Activated naive CD4-positive, alpha-beta T cell treated with anti-CD3 and anti-CD28 coated beads for 36 hours (primary cell): ENCODE measurements at regions of chr18 and their contacts with region 1.

Region 1: DNA sequence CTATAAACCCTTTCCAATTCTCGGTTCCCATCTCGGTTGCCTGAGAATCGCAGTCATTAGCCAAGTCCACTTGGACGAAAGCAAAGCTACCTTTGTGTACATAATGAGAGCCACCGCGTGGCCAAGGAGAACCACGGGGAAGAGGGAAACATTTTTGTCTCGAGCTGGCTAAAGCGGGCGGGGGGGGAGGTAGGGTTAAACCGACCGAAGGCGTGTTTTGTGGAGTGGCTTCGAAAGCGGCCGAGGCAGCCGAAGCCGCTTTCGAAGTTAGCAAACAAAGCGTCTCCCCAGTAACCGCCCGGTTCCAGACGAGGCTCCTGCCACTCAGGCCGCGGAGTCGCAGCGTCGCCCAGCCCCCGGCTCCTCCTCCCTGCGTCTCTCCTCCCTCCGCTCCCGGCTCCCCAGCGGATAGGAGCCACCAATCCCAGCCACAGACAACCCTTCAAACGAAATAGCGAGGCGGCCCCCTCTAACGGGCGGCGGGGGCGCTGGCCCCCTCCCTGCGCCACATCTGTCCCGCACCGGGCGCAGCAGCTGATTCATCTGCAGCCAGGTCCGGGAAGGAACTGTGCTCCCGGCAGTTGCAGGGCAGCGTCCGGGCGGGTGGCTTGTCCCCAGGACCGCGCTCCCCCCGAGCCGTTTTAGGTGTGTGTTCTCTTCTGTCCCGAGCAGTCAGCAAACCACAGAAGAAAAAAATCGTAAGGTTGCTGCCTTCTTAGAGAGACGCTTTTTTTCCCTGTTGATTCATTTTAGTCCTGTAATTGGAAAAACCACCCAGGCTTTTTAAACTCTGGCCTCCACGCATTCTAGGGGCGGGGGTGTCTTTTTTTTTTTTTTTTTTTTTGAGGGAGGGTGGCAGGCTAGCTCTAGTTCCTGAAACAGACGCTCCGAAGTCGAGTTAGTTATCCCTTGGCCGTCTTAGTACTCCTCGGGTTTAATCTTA is 1.8 kb upstream of the TGIF1 start:
- DNase-seq: peak; percentile 90
- H3K4me3 Mint-ChIP-seq: peak overlapping the region; percentile 89
- H3K27ac Mint-ChIP-seq: peak overlapping the region; percentile 98
- H3K4me1 Mint-ChIP-seq: peaks cover 30% of the 10 kb centered on the region
- H3K27me3 Mint-ChIP-seq: no peaks in the 10 kb centered on the region

Region 2: DNA sequence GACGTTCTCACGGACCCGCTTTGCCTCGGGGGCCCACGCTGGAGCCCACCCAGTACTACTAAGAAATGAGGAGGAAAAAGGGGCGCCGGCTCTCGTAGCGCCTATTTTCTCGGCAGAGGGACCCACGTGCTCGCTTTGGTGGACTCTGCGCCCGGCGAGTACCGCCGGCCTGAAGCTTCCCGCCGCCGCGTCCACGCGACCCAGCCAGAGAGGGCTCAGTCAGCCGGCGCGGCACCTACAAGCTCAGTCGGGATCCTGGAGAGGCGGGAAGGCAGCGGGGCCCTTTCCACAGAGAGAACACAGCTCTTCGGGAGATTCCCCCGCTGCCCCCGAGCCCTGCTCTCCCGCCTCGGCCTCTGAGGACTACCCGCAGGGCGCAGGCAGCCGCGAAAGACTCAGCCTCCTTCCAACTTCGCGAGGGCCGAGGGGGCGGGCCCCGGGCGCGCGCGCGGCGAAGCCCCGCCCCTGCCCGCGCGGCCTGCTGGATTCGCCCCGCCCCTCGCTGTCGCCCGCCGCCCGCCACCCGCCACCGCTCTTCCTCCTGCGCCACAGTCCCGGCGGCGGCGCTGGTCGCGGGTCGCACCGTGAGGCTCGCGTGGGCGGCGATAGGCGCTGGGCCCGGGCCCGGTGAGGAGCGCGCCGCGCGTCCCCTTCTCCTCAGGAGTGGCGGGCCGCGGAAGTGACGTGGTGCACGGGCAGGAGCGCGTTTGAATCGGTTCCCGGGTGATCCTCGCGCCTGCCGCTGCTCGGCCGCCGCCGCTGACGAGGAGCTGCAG is 792.8 kb before region 1 on chr18 and contains the start of gene SMCHD1:
- CTCF ChIA-PET with region 1: no interaction called
- intact Hi-C with region 1: loop called (anchors 2 kb)
- DNase-seq: peak; percentile 93
- H3K4me3 Mint-ChIP-seq: peak within 1 kb of the TSS; percentile 93
- H3K27ac Mint-ChIP-seq: peak within 1 kb of the TSS; percentile 96
- H3K4me1 Mint-ChIP-seq: peaks cover 34% of the 10 kb centered on the region
- H3K27me3 Mint-ChIP-seq: no peaks in the 10 kb centered on the region
- total RNA-seq, gene SMCHD1: 91.3 to 91.5 TPM

Region 3: DNA sequence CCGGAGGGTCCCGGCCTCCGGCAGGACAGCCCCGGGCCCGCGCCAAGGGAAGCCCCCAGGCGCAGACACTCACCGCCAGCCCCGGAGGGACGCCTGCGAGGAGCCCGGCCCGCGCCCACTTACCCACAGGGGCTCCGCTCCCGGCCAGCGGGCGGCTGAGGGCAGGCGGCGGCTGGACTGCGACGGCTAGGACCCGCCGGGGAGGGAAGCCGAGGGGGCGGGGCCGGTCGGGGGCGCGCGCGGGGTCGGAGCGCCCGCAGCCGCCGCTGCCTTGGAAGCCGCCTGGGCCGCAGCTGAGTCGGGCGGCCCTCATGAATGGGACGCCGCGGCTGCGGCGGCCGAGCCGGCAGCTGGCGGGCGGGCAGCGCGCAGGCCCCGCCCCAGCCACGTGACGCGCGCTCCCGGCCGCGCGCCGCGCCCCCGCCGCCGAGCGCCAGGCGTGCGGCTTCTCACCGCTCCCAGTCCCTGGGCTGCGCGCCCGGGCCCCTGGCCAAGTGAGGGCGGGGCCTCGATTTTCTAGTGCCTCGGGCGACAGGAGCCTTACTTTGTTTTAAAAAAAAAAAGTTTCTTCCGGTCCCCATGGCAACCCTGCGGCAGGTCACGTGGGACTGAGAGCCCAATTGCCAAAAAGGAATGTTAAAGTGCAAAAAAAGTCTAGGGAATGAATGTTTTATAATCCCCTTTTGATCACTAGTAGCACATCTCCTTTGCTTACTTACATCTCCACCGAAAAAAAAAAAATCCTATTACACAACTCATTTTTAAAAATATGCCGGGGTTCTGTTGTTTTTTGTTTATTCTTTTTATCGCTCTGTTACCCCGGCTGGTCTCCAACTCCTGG is 435.0 kb before region 1 on chr18 and contains the start of gene LPIN2:
- CTCF ChIA-PET with region 1: no interaction called
- intact Hi-C with region 1: loop called (anchors 2 kb)
- DNase-seq: peak; percentile 97
- H3K4me3 Mint-ChIP-seq: peak within 1 kb of the TSS; percentile 84
- H3K27ac Mint-ChIP-seq: peak within 1 kb of the TSS; percentile 92
- H3K4me1 Mint-ChIP-seq: peaks cover 68% of the 10 kb centered on the region
- H3K27me3 Mint-ChIP-seq: no peaks in the 10 kb centered on the region
- total RNA-seq, gene LPIN2: 62.4 to 65.7 TPM

Region 4: DNA sequence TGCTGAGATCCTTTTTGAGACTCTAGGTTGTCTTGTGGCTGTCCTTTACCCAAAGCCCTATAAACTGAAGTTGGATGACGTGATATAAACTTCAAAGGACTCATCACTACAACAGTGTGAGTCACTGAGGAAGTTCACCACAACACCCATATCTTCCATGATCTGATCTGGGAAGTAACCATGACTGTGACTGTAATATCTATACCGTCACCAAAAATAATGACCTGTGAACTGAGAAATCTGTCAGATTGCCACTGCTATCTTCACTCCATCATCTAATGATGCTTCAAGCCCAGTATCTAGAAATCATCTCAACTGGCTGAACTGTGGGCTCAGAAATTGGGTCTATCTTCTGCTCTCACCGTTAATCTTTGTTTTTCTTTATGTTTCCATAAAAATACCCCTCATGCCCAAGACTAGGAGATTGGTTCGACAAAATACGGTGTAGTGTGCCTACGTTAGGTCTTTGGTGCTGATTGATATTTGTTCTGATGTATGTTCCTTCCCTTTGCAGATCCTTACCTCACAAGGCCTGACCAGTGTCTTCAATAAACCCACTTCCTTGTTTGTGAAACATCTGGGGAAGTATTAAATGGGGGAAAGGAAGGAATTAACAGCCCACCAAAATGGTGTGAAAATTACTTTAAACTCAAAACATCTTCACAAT is 108.0 kb before region 1 on chr18:
- CTCF ChIA-PET with region 1: no interaction called
- intact Hi-C with region 1: loop called (anchors 1 kb)
- DNase-seq: peak; percentile 26
- H3K4me3 Mint-ChIP-seq: no peak overlapping the region
- H3K27ac Mint-ChIP-seq: peak overlapping the region; percentile 62
- H3K4me1 Mint-ChIP-seq: peaks cover 25% of the 10 kb centered on the region
- H3K27me3 Mint-ChIP-seq: no peaks in the 10 kb centered on the region

Region 5: DNA sequence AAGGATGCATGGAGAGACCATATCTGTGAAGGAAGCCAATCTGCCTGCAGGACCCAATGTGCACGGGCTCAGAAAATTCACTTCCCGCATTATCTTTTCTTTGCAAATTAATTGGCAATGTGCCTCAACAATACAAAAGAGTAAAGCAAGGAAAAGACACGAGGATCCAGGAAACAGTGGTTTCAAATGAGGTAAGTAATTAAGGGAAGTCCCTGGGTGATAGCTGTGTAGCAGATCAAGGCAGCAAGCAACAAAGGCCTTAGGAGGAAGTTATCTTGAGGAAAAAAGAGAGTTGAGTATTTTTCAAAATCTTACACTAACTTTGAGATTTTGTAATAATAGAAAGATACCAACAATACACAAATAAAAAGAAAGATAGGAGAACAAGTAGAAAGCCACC is 42.5 kb before region 1 on chr18:
- CTCF ChIA-PET with region 1: no interaction called
- intact Hi-C with region 1: no loop called
- DNase-seq: no peak
- H3K4me3 Mint-ChIP-seq: no peak overlapping the region
- H3K27ac Mint-ChIP-seq: no peak overlapping the region
- H3K4me1 Mint-ChIP-seq: peaks cover 24% of the 10 kb centered on the region
- H3K27me3 Mint-ChIP-seq: no peaks in the 10 kb centered on the region

Region 6: GRCh38 chr18:3525870-3526420 is 77.8 kb after region 1 on chr18:
- CTCF ChIA-PET with region 1: no interaction called
- intact Hi-C with region 1: no loop called
- DNase-seq: peak; percentile 58
- H3K4me3 Mint-ChIP-seq: no peak overlapping the region
- H3K27ac Mint-ChIP-seq: no peak overlapping the region
- H3K4me1 Mint-ChIP-seq: peaks cover 17% of the 10 kb centered on the region
- H3K27me3 Mint-ChIP-seq: no peaks in the 10 kb centered on the region

Region 7: GRCh38 chr18:3585656-3586509 is 137.7 kb after region 1 on chr18:
- CTCF ChIA-PET with region 1: interaction called, 42 read pairs
- intact Hi-C with region 1: loop called (anchors 1 kb)
- DNase-seq: peak; percentile 88
- H3K4me3 Mint-ChIP-seq: no peak overlapping the region
- H3K27ac Mint-ChIP-seq: peak overlapping the region; percentile 1
- H3K4me1 Mint-ChIP-seq: peaks cover 36% of the 10 kb centered on the region
- H3K27me3 Mint-ChIP-seq: no peaks in the 10 kb centered on the region

Region 8: GRCh38 chr18:3665780-3666525 is 217.8 kb after region 1 on chr18:
- CTCF ChIA-PET with region 1: interaction called, 47 read pairs
- intact Hi-C with region 1: no loop called
- DNase-seq: peak; percentile 84
- H3K4me3 Mint-ChIP-seq: peak overlapping the region; percentile 38
- H3K27ac Mint-ChIP-seq: no peak overlapping the region
- H3K4me1 Mint-ChIP-seq: peaks cover 26% of the 10 kb centered on the region
- H3K27me3 Mint-ChIP-seq: no peaks in the 10 kb centered on the region